Ascending aorta (tissue), 2 donors: ENCODE measurements at regions of chr17 and their contacts with region 1.

Region 1: GRCh38 chr17:4420692-4421131 is 13.0 kb upstream of the SPNS3 start:
- DNase-seq: peak in 1 of 2 donors; percentile 77
- H3K4me3 ChIP-seq: no peak overlapping the region
- H3K27ac ChIP-seq: no peak overlapping the region
- H3K4me1 ChIP-seq: peaks cover 0 to 2% of the 10 kb centered on the region in 2 donors
- H3K27me3 ChIP-seq: no peaks in the 10 kb centered on the region
- CTCF ChIP-seq: peak; percentile 72 to 88 (median 80)

Region 2: DNA sequence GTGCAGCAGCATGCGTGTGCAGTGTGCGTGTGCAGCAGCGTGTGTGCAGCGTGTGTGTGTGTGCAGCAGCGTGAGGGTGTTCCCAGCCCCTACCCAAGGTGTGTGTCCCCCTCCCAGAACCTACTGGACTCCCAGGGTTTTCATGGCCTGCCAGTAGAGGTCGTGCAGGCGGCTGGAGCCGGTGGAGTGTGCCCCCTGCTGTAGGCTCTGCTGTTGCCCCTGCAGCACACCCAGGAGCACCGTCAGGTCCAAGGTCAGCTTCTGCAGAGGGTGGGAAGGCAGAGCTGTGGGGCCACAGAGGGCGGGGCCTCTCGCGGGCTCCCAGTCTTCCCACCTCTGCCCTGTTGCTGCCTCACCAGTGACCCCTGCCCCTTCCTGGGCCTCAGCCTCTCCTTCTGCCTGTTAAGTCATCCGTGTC is 119.5 kb after region 1 on chr17:
- intact Hi-C with region 1: loop called (anchors 5 kb)
- DNase-seq: no peak
- H3K4me3 ChIP-seq: no peak overlapping the region
- H3K27ac ChIP-seq: no peak overlapping the region
- H3K4me1 ChIP-seq: peaks cover 4 to 20% of the 10 kb centered on the region in 2 donors
- H3K27me3 ChIP-seq: no peaks in the 10 kb centered on the region
- CTCF ChIP-seq: no peak

Region 3: DNA sequence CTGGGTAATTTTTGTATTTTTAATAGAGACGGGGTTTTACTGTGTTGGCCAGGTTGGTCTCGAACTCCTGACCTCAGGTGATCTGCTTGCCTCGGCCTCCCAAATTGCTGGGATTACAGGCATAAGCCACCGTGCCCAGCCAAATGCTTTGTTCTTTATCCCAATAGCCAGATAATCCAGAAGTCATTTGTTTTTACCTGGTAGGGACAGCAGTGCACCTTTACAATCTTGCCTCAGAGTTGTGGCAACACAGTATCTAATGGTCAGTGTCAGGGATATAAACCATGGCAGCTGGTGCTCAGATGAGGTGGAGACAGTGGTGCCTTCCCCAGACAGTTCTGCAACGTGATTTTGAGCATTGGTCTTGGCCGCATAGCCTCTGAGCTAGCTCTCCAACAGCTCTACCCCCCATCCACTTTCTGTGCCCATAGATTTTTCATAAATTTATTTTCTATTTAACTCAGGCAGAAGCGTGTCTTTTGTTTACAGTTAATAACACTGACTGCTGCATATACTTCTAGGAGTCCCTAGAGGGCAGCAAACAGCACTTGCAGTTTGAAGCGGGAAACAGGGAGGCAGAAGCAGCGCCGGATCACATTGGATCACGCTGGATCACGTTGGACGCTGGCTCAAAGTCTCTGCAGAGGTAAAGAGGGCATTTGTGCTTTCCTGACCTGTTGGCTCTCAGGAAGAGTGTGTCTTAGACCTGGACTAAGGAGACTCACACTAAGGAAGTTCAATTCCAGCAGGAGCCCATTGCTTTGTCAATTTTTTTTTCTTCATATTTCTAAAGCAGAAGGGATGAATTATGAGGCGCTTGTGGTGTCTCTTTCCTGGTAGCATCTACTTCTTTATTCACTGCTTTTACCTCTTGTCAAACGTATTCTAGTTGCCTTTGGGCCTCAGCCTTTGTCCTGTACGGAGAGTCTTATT is 144.8 kb after region 1 on chr17:
- intact Hi-C with region 1: loop called (anchors 5 kb)
- DNase-seq: peak in 1 of 2 donors; percentile 81
- H3K4me3 ChIP-seq: no peak overlapping the region
- H3K27ac ChIP-seq: no peak overlapping the region
- H3K4me1 ChIP-seq: peaks cover 6 to 10% of the 10 kb centered on the region in 2 donors
- H3K27me3 ChIP-seq: no peaks in the 10 kb centered on the region
- CTCF ChIP-seq: peak; percentile 50 to 83 (median 83)

Region 4: GRCh38 chr17:4625181-4625617 is 204.5 kb after region 1 on chr17:
- intact Hi-C with region 1: loop called (anchors 1 kb)
- DNase-seq: no peak
- H3K4me3 ChIP-seq: no peak overlapping the region
- H3K27ac ChIP-seq: no peak overlapping the region
- H3K4me1 ChIP-seq: peaks cover 0 to 4% of the 10 kb centered on the region in 2 donors
- H3K27me3 ChIP-seq: no peaks in the 10 kb centered on the region
- CTCF ChIP-seq: no peak